Panc1 (cell line): ENCODE measurements at regions of chr11 and their contacts with region 1.

Region 1: DNA sequence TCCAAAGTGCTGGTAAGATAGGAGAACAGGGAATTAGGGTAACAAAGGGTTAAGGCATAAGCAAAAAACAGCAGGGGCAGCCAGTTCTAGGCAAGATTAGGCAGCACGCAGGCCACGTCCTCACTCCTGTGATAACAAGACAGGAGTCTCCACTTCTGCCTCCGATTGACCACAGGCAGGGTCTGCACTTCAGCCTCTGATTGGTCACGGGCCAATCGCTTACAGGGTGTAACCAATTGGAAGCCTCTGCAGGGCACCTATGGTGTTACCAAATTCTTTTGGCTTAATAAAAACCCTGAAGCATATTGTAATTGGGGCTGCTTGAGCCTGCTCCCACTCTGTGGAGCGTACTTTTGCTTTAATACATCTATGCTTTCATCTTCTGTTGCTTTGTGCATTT is 12.2 kb upstream of the GSTP1 start:
- DNase-seq: no peak
- ATAC-seq: no peak
- H3K4me3 ChIP-seq: no peak overlapping the region
- H3K27ac ChIP-seq: no peak overlapping the region
- H3K4me1 ChIP-seq: no peaks in the 10 kb centered on the region
- H3K27me3 ChIP-seq: no peaks in the 10 kb centered on the region; the same call in 1 of the 2 replicates
- CTCF ChIP-seq: no peak

Region 2: GRCh38 chr11:67373925-67374618 is 197.4 kb before region 1 on chr11:
- CTCF ChIA-PET with region 1: interaction called, 19 read pairs
- POLR2A ChIA-PET with region 1: no interaction called
- in situ Hi-C with region 1: no loop called
- intact Hi-C with region 1: no loop called
- DNase-seq: peak; percentile 80
- ATAC-seq: peak; percentile 67
- H3K4me3 ChIP-seq: peak overlapping the region; percentile 65 to 69
- H3K27ac ChIP-seq: peak overlapping the region; percentile 98
- H3K4me1 ChIP-seq: peaks cover 73% of the 10 kb centered on the region
- H3K27me3 ChIP-seq: no peaks in the 10 kb centered on the region
- CTCF ChIP-seq: no peak; the same call in 1 of the 2 replicates

Region 3: GRCh38 chr11:67534070-67534679 is 37.3 kb before region 1 on chr11:
- CTCF ChIA-PET with region 1: no interaction called
- POLR2A ChIA-PET with region 1: no interaction called
- in situ Hi-C with region 1: no loop called
- intact Hi-C with region 1: loop called (anchors 2 kb)
- DNase-seq: no peak
- ATAC-seq: no peak
- H3K4me3 ChIP-seq: no peak overlapping the region
- H3K27ac ChIP-seq: no peak overlapping the region
- H3K4me1 ChIP-seq: no peaks in the 10 kb centered on the region
- H3K27me3 ChIP-seq: no peaks in the 10 kb centered on the region
- CTCF ChIP-seq: no peak